ENCODE measurements at regions of chr12 and their contacts with region 1.

Region 1: GRCh38 chr12:47038270-47038748 is 41.1 kb upstream of the PCED1B start:
- DNase-seq: no peak
- ATAC-seq: no peak
- H3K4me3 ChIP-seq: no peak overlapping the region
- H3K4me3 Mint-ChIP-seq: no peak overlapping the region
- H3K27ac ChIP-seq: no peak overlapping the region
- H3K27ac Mint-ChIP-seq: no peak overlapping the region
- H3K4me1 ChIP-seq: no peaks in the 10 kb centered on the region
- H3K4me1 Mint-ChIP-seq: peaks cover 10 to 18% (median 13%) of the 10 kb centered on the region in 3 donors
- H3K27me3 ChIP-seq: no peaks in the 10 kb centered on the region
- H3K27me3 Mint-ChIP-seq: peaks cover 0 to 4% of the 10 kb centered on the region in 2 donors

Region 2: DNA sequence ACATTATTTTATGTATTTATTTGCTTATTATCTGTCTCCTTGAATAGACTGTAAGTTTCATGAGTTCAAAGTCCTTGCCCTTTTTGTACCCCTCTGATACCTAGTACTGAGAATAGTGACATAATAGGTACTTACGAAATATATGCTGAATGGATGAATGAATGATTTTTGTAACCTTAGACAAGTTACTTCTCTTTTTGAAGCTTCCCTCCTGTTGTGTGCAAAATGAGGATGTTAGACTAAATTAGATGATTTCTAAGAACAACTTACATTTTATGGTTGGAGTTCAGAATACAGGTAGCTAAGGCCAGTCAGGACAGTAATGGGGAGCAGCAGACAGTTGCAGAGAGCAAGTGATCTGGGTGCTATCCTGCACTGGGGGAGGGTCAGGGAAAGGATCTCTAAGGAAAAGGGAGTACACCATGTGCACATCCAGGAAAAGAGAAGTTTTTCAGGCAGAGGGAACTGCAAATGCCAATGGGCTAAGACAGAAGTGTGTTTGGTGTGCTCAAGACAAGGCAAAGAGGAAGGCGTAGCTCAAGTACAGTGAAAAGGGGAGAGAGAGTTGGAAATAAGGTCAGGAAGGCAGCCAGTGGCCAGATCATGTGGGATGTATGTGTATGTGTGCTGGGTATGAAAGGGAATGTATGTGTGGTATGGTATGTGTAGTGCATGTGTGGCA is 100.8 kb after region 1 on chr12:
- CTCF ChIA-PET with region 1: no interaction called
- POLR2A ChIA-PET with region 1: interaction called in 1 of 2 experiments, 11 read pairs
- DNase-seq: no peak
- ATAC-seq: no peak
- H3K4me3 ChIP-seq: no peak overlapping the region
- H3K4me3 Mint-ChIP-seq: no peak overlapping the region
- H3K27ac ChIP-seq: no peak overlapping the region
- H3K27ac Mint-ChIP-seq: no peak overlapping the region
- H3K4me1 ChIP-seq: no peaks in the 10 kb centered on the region
- H3K4me1 Mint-ChIP-seq: peaks cover 15 to 21% (median 16%) of the 10 kb centered on the region in 3 donors
- H3K27me3 ChIP-seq: no peaks in the 10 kb centered on the region
- H3K27me3 Mint-ChIP-seq: no peaks in the 10 kb centered on the region

Measured in T-cell (primary cell).